CD8-positive, alpha-beta T cell (primary cell): ENCODE measurements at regions of chr19 and their contacts with region 1.

Region 1: GRCh38 chr19:11964858-11965645 is at the start of gene ZNF763:
- DNase-seq: peak; percentile 73 to 93 (median 89)
- ATAC-seq: peak; percentile 93
- H3K4me3 ChIP-seq: peak within 1 kb of the TSS; percentile 69 to 93
- H3K4me3 Mint-ChIP-seq: peak within 1 kb of the TSS; percentile 97
- H3K27ac ChIP-seq: peak within 1 kb of the TSS; percentile 80 to 96
- H3K27ac Mint-ChIP-seq: peak within 1 kb of the TSS; percentile 98
- H3K4me1 ChIP-seq: peaks cover 13% of the 10 kb centered on the region
- H3K4me1 Mint-ChIP-seq: peaks cover 30% of the 10 kb centered on the region
- H3K27me3 ChIP-seq: no peaks in the 10 kb centered on the region
- H3K27me3 Mint-ChIP-seq: no peaks in the 10 kb centered on the region
- CTCF ChIP-seq: no peak
- total RNA-seq, gene ZNF763: 1.5 to 1.8 TPM

Region 2: GRCh38 chr19:11881151-11881800 is 83.8 kb before region 1 on chr19:
- CTCF ChIA-PET with region 1: interaction called, 7 read pairs
- POLR2A ChIA-PET with region 1: no interaction called
- intact Hi-C with region 1: loop called in 1 of 2 experiments (anchors 1 kb)
- DNase-seq: peak; percentile 33 to 79 (median 66)
- ATAC-seq: peak; percentile 62
- H3K4me3 ChIP-seq: peak overlapping the region in 1 of 2 experiments; percentile 33
- H3K4me3 Mint-ChIP-seq: no peak overlapping the region
- H3K27ac ChIP-seq: no peak overlapping the region
- H3K27ac Mint-ChIP-seq: no peak overlapping the region
- H3K4me1 ChIP-seq: peaks cover 3% of the 10 kb centered on the region
- H3K4me1 Mint-ChIP-seq: peaks cover 2% of the 10 kb centered on the region
- H3K27me3 ChIP-seq: no peaks in the 10 kb centered on the region
- H3K27me3 Mint-ChIP-seq: no peaks in the 10 kb centered on the region
- CTCF ChIP-seq: peak; percentile 53

Region 3: GRCh38 chr19:11902228-11902627 is 62.8 kb before region 1 on chr19:
- CTCF ChIA-PET with region 1: no interaction called
- POLR2A ChIA-PET with region 1: no interaction called
- intact Hi-C with region 1: no loop called
- DNase-seq: no peak
- ATAC-seq: no peak
- H3K4me3 ChIP-seq: no peak overlapping the region
- H3K4me3 Mint-ChIP-seq: no peak overlapping the region
- H3K27ac ChIP-seq: no peak overlapping the region
- H3K27ac Mint-ChIP-seq: no peak overlapping the region
- H3K4me1 ChIP-seq: no peaks in the 10 kb centered on the region
- H3K4me1 Mint-ChIP-seq: no peaks in the 10 kb centered on the region
- H3K27me3 ChIP-seq: no peaks in the 10 kb centered on the region
- H3K27me3 Mint-ChIP-seq: no peaks in the 10 kb centered on the region
- CTCF ChIP-seq: no peak

Region 4: DNA sequence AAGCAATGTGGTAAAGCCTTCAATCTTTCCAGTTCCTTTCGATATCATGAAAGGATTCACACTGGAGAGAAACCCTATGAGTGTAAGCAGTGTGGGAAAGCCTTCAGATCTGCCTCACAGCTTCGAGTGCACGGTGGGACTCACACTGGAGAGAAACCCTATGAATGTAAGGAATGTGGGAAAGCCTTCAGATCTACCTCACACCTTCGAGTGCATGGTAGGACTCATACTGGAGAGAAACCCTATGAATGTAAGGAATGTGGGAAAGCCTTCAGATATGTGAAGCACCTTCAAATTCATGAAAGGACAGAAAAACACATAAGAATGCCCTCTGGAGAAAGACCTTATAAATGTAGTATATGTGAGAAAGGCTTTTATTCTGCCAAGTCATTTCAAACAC is 15.9 kb before region 1 on chr19:
- CTCF ChIA-PET with region 1: interaction called, 14 read pairs
- POLR2A ChIA-PET with region 1: interaction called, 3 read pairs
- intact Hi-C with region 1: no loop called
- DNase-seq: no peak
- ATAC-seq: no peak
- H3K4me3 ChIP-seq: no peak overlapping the region
- H3K4me3 Mint-ChIP-seq: no peak overlapping the region
- H3K27ac ChIP-seq: no peak overlapping the region
- H3K27ac Mint-ChIP-seq: no peak overlapping the region
- H3K4me1 ChIP-seq: no peaks in the 10 kb centered on the region
- H3K4me1 Mint-ChIP-seq: no peaks in the 10 kb centered on the region
- H3K27me3 ChIP-seq: no peaks in the 10 kb centered on the region
- H3K27me3 Mint-ChIP-seq: no peaks in the 10 kb centered on the region
- CTCF ChIP-seq: no peak

Region 5: DNA sequence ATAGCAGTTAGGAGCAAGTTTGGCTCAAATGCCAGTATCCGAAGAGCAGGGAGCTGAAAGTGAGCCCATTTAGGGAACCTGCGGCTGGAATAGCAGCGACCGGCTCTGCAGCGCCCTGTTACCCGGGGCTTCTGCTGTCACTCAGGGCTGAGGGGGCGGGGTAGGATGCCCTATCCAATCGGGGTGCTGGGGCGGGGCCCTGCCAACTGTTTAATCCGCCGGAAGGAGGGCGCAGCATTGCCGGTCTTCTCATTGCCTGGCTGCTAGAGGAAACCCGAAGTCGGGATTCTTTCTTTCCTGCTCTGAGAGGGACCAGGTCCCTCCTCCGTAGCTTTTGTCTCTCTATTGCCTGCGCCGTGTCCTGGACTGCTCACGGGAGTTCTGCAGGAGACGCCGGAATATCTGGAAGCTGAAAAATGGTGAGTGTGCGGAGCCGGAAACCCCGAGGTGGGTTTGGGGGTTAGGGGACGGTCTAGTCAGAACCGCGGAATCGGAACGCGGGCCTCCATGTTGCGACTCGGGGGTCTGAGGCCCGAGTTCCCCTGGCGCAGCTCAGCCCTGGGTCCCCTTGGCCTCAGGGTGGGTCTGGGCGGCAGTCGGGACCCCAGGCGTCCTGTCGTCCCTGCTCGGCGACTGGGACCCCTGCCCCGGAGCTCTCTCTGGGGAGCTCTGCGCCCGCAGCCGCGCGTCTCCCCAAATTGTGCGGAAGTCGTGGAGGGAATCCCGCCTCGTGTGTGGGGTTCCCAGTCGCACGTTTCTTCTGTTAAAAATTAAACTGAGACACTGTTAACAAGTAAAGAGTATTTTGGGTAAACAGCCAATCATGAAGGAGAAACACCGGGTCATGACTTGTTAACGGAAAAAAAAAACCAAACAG is 22.6 kb after region 1 on chr19:
- CTCF ChIA-PET with region 1: interaction called, 76 read pairs
- POLR2A ChIA-PET with region 1: interaction called, 22 read pairs
- intact Hi-C with region 1: loop called (anchors 1 kb)
- DNase-seq: peak; percentile 82 to 94 (median 91)
- ATAC-seq: peak; percentile 92
- H3K4me3 ChIP-seq: peak overlapping the region; percentile 89 to 98
- H3K4me3 Mint-ChIP-seq: peak overlapping the region; percentile 99
- H3K27ac ChIP-seq: peak overlapping the region; percentile 79 to 83
- H3K27ac Mint-ChIP-seq: peak overlapping the region; percentile 91
- H3K4me1 ChIP-seq: peaks cover 10% of the 10 kb centered on the region
- H3K4me1 Mint-ChIP-seq: peaks cover 26% of the 10 kb centered on the region
- H3K27me3 ChIP-seq: no peaks in the 10 kb centered on the region
- H3K27me3 Mint-ChIP-seq: no peaks in the 10 kb centered on the region
- CTCF ChIP-seq: no peak

Region 6: DNA sequence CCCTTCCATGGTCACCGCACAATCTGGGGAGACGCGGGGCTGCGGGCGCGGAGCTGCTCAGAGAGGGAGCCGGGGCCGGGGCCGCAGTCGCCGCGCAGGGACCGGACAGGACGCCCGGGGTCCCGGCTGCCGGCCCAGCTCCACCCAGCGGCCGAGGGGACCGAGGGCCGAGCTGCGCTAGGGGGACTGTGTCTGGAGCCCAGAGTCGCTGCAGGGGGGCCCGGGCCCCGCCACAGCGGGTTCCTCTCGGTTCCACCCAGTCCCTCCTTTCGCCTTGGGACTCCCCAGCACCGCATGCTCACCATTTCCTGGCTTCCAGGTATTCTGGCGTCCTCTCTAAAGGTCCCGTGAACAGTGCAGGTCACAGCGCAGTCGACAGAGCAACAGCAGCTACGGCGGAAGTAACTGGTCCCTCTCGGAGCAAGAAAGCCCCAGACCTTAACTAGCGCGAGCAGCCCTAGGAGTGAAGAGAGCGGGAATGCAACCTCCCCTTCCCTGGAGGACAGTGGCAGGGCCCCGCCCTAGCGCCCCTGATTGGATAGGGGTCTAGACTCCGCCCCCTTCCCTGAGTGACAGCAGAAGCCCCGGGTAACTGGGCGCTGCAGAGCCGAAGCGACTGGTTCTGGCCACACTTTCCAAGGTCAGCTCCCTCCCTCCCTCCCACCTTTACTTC is 87.6 kb after region 1 on chr19 and contains the start of gene ZNF878:
- CTCF ChIA-PET with region 1: interaction called, 4 read pairs
- POLR2A ChIA-PET with region 1: no interaction called
- intact Hi-C with region 1: loop called (anchors 2 to 10 kb)
- DNase-seq: peak in 8 of 9 experiments; percentile 19 to 65 (median 42)
- ATAC-seq: peak; percentile 72
- H3K4me3 ChIP-seq: peak within 1 kb of the TSS; percentile 59 to 75
- H3K4me3 Mint-ChIP-seq: peak within 1 kb of the TSS; percentile 84
- H3K27ac ChIP-seq: no peak within 1 kb of the TSS
- H3K27ac Mint-ChIP-seq: peak within 1 kb of the TSS; percentile 37
- H3K4me1 ChIP-seq: peaks cover 10% of the 10 kb centered on the region
- H3K4me1 Mint-ChIP-seq: peaks cover 15% of the 10 kb centered on the region
- H3K27me3 ChIP-seq: no peaks in the 10 kb centered on the region
- H3K27me3 Mint-ChIP-seq: peaks cover 12% of the 10 kb centered on the region
- CTCF ChIP-seq: no peak
- total RNA-seq, gene ZNF878: not detected

Region 7: GRCh38 chr19:12092065-12092867 is 127.2 kb after region 1 on chr19:
- CTCF ChIA-PET with region 1: interaction called, 3 read pairs
- POLR2A ChIA-PET with region 1: no interaction called
- intact Hi-C with region 1: loop called in 1 of 2 experiments (anchors 5 kb)
- DNase-seq: peak in 8 of 9 experiments; percentile 15 to 70 (median 42)
- ATAC-seq: peak; percentile 72
- H3K4me3 ChIP-seq: peak overlapping the region; percentile 37 to 55
- H3K4me3 Mint-ChIP-seq: peak overlapping the region; percentile 77
- H3K27ac ChIP-seq: no peak overlapping the region
- H3K27ac Mint-ChIP-seq: no peak overlapping the region
- H3K4me1 ChIP-seq: peaks cover 11% of the 10 kb centered on the region
- H3K4me1 Mint-ChIP-seq: peaks cover 13% of the 10 kb centered on the region
- H3K27me3 ChIP-seq: peaks cover 0 to 2% of the 10 kb centered on the region in 2 experiments
- H3K27me3 Mint-ChIP-seq: peaks cover 10% of the 10 kb centered on the region
- CTCF ChIP-seq: no peak

Region 8: DNA sequence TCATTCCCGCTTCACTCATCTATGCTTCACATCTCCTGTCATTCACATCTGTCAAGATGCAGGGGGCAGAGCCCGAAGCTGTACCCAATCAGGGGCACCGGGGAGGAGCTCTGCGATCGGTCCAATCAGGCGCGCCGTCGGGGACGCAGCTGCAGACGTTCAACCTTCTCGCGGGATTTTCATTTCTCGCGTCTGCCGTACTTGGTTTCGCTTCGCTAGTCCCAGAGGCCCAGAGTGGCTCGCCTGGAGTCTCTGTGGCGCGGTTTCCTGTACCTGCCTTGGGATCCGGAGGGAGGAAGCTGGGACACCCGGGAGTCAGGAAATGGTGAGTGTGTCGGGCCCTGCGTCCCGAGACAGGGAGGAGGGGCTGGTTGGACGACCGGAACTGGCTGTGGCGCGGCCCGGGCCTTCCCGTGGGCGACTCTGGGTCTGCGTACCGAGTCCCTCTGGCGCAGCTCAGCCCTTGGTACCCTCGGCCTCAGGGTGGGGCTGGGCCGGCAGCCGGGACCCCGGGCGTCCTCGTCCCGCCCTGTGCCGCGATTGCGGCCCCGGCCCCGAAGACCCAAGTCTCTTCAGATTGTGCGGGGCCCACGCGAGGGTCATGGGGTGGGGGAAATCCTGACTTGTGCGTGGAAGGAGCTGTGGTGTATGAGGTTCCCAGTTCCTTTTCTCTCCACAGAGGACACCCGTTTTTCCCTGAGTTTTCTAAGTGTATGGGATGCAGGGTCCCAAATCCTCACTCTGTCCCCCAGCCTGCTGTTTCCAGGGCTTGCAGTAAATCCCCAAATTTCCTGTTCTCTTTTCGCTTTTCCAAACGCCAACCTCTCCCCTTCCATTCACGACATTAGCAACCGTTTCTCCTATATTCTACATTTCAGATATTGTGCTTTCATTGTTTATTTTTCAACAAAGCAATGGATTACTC is 198.1 kb after region 1 on chr19 and contains the start of gene ZNF136:
- CTCF ChIA-PET with region 1: no interaction called
- POLR2A ChIA-PET with region 1: no interaction called
- intact Hi-C with region 1: loop called in 1 of 2 experiments (anchors 1 kb)
- DNase-seq: peak; percentile 84 to 97 (median 91)
- ATAC-seq: peak; percentile 99
- H3K4me3 ChIP-seq: peak within 1 kb of the TSS; percentile 83 to 86
- H3K4me3 Mint-ChIP-seq: peak within 1 kb of the TSS; percentile 96
- H3K27ac ChIP-seq: peak within 1 kb of the TSS; percentile 93 to 96
- H3K27ac Mint-ChIP-seq: peak within 1 kb of the TSS; percentile 98
- H3K4me1 ChIP-seq: peaks cover 25% of the 10 kb centered on the region
- H3K4me1 Mint-ChIP-seq: peaks cover 46% of the 10 kb centered on the region
- H3K27me3 ChIP-seq: no peaks in the 10 kb centered on the region
- H3K27me3 Mint-ChIP-seq: no peaks in the 10 kb centered on the region
- CTCF ChIP-seq: no peak
- total RNA-seq, gene ZNF136: 41.7 to 42.1 TPM